ENCODE measurements at regions of chr17 and their contacts with region 1.

Region 1: GRCh38 chr17:12020642-12021622 is at the start of gene MAP2K4:
- DNase-seq: peak; percentile 86
- H3K4me3 ChIP-seq: peak within 1 kb of the TSS; percentile 67 to 83 (median 72)
- H3K27ac ChIP-seq: peak within 1 kb of the TSS; percentile 64
- H3K4me1 ChIP-seq: peaks cover 40% of the 10 kb centered on the region
- H3K27me3 ChIP-seq: no peaks in the 10 kb centered on the region
- CTCF ChIP-seq: no peak
- total RNA-seq, gene MAP2K4: 36.2 to 42.2 TPM

Region 2: GRCh38 chr17:11736613-11737312 is 284.2 kb before region 1 on chr17:
- CTCF ChIA-PET with region 1: no interaction called
- dilution Hi-C with region 1: no loop called
- in situ Hi-C with region 1: no loop called
- intact Hi-C with region 1: no loop called
- DNase-seq: no peak
- H3K4me3 ChIP-seq: no peak overlapping the region
- H3K27ac ChIP-seq: no peak overlapping the region
- H3K4me1 ChIP-seq: no peaks in the 10 kb centered on the region
- H3K27me3 ChIP-seq: no peaks in the 10 kb centered on the region
- CTCF ChIP-seq: no peak

Region 3: DNA sequence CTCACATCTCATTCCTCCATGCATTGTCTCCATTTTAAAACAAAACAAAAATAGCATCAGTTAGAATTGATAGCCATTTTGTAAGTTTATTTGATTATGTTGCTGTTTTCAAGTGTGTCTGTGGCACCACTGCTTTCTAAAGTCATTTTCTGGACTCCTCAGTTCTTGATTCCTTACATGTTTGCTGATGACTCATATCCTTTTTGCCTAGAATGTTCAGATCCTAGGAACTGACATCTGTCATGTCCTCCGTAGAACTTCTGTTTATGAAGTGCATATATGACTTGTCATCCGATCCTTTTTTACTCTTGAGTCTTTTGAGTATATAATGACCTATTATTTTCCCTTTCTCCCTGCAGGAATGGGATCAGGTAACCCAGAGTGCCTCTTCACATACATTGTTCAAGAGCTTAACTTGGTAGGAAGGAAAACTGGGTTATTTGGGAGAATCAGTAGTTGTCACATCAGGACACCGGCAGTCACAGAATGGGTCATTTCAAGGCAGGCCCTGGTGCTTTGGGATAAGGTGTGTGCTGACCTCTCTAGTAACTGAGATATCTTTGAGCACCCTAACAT is 69.0 kb after region 1 on chr17:
- CTCF ChIA-PET with region 1: no interaction called
- dilution Hi-C with region 1: no loop called
- in situ Hi-C with region 1: no loop called
- intact Hi-C with region 1: loop called (anchors 5 kb)
- DNase-seq: peak; percentile 52
- H3K4me3 ChIP-seq: no peak overlapping the region
- H3K27ac ChIP-seq: peak overlapping the region; percentile 10
- H3K4me1 ChIP-seq: peaks cover 15% of the 10 kb centered on the region
- H3K27me3 ChIP-seq: no peaks in the 10 kb centered on the region
- CTCF ChIP-seq: no peak

Measured in mammary epithelial cell (primary cell).